ENCODE measurements at regions of chr14 and their contacts with region 1.

Region 1: DNA sequence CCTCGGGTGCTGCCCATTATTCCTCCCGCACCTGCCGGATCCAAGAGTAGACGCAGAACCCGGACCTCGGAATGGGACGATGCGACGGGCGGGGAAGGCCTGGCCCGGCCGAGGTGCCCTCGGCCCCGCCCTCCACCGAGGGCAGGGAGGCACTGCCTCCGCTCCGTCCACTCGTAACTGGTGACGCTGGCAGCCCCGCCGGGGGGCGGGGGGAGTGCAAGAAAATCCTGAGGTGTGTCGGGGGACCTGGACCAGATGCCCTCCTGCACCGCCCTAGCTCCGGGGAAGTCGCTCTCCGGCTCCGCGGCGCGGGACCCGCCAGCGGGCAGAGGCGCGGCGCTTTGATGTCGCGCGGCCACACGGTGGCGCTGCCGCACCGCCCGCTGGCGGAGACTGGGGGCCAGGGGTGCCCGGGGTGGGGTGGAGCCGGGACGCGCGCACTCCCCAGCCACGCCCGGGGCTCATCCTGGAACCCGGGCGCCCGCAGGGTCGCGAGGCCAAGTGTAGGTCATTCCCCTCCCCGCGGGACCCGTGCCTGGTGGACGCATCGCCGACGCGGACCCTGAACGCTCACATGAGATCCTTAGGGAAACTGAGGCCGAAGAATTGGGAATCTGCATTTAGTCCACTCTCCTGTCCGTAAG is 202.8 kb downstream of the TTC8 start:
- DNase-seq: peak; percentile 65
- ATAC-seq: peak; percentile 96

Region 2: DNA sequence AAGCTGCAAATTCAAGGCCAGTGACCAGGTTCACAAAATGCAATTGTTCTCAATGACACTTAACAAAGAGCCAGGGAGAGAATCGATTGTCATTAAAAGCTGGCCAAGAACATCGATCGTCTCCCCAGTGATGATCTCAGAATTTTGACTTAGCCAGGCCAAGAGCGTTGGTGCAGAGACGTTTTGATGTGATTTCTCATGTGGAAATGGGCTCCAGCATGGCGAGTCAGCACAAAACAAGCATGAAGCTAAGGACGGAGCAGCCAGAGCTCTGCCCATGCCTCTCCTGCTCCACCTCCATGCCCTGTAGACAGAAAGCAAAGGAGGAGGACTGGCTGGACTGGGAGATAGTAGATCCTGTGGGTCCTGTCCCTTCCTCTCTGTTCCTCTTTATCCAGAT is 119.1 kb after region 1 on chr14:
- intact Hi-C with region 1: no loop called
- DNase-seq: no peak
- ATAC-seq: no peak

Region 3: GRCh38 chr14:89455412-89455811 is 428.2 kb after region 1 on chr14:
- intact Hi-C with region 1: no loop called
- DNase-seq: peak; percentile 54
- ATAC-seq: peak; percentile 53

Region 4: GRCh38 chr14:89915114-89915878 is 888.1 kb after region 1 on chr14:
- intact Hi-C with region 1: loop called (anchors 5 kb)
- DNase-seq: no peak
- ATAC-seq: peak; percentile 76